ENCODE measurements at regions of chr17 and their contacts with region 1.

Region 1: DNA sequence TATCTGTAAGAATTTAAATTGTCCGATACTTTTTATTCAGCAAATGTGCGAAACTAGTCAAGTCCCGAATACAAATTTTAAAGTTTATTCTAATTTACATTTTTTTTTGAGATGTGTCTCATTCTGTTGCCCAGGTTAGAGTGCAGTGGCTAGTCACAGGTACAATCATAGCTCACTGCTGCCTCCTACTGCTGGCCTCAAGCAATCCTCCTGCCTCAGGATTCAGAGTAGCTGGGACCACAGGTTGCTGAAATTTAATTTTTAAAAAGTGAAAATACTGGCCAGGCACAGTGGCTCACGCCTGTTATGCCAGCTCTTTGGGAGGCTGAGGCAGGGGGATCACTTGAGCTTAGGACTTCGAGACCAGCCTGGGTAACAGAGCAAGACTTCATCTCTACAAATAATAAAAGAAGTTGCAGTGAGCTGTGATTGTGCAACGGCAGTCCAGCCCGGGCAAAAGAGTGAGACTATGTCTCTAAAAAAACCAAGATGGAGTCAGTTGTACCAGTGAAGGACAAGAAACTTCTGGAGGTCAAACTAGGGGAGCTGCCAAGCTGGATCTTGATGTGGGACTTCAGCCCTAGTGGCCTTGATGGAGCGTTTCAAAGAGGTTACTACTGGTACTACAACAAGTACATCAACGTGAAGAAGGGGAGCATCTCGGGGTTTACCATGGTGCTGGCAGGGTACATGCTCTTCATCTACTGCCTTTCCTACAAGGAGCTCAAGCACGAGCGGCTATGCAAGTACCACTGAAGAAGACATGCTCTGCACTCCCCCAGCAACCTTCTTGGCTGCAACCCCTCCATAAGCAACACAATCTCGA is 5.6 kb downstream of the POLG2 start:
- DNase-seq: peak; percentile 58
- H3K4me3 ChIP-seq: no peak overlapping the region
- H3K27ac ChIP-seq: no peak overlapping the region
- H3K4me1 ChIP-seq: peaks cover 15% of the 10 kb centered on the region
- H3K27me3 ChIP-seq: no peaks in the 10 kb centered on the region
- CTCF ChIP-seq: peak; percentile 74 to 76
- POLR2A ChIP-seq: no peak

Region 2: GRCh38 chr17:64063766-64064224 is 427.5 kb before region 1 on chr17:
- CTCF ChIA-PET with region 1: no interaction called
- POLR2A ChIA-PET with region 1: no interaction called
- dilution Hi-C with region 1: no loop called
- intact Hi-C with region 1: no loop called
- DNase-seq: peak; percentile 73
- H3K4me3 ChIP-seq: no peak overlapping the region
- H3K27ac ChIP-seq: no peak overlapping the region
- H3K4me1 ChIP-seq: peaks cover 22% of the 10 kb centered on the region
- H3K27me3 ChIP-seq: no peaks in the 10 kb centered on the region
- CTCF ChIP-seq: peak; percentile 60 to 71
- POLR2A ChIP-seq: no peak

Region 3: DNA sequence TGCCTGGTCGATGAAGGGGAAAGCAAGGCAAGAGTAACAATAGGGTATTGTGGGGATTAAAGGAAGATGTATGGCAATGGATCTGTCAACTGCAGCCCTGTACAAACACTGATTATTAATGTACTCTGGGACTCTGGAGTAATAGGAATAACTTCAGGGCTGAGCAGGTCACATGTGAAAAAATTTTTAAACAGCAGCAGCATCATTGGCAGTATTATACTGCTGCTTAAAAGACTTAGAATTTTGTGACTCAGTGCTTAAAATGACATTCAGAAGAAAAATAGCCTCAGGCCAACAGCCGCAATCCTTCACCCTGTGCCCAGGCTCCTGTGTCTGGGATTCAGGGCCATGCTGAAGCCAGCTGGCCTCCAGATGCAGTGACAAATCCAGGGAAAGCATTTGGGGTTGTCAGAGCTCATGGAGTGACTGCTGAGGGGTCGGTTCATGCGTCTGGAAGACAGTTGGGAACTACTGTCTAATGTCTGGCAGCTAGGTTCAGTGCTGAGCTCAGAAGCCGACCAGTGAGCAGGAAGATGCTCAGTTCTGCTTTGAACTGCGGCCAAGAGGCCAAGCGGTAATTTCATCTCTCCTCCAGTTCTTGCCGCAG is 250.4 kb before region 1 on chr17:
- CTCF ChIA-PET with region 1: no interaction called
- POLR2A ChIA-PET with region 1: no interaction called
- dilution Hi-C with region 1: no loop called
- intact Hi-C with region 1: no loop called
- DNase-seq: peak; percentile 75
- H3K4me3 ChIP-seq: no peak overlapping the region
- H3K27ac ChIP-seq: no peak overlapping the region
- H3K4me1 ChIP-seq: peaks cover 6% of the 10 kb centered on the region
- H3K27me3 ChIP-seq: no peaks in the 10 kb centered on the region
- CTCF ChIP-seq: no peak
- POLR2A ChIP-seq: no peak

Region 4: DNA sequence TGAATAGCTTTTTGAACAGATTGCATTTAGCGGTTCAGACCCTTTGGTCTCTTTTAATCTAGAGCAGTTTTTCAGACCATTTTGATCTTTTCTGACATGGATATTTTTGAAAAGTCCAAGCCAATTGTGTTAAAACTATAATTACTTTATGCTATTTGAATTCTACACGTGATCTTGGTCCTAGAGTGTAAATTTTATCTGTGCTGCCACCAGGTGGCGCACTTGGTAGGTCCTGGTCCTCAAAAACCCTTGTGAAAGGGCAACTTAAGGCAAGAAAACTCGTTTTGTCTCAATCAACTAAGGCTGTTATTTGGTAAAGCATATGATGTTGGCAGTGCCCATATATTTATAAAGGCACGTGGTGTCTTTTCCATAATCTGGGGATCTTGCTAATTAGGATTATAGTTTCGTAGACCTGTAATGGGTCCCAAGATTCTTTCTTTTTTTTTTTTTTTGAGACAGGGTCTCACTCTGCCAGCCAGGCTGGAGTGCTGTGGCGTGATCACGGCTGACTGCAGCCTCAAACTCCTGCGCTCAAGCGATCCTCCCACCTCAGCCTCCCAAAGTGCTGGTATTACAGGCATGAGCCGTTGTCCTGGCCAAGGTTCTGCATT is 184.3 kb before region 1 on chr17:
- CTCF ChIA-PET with region 1: interaction called, 18 read pairs
- POLR2A ChIA-PET with region 1: no interaction called
- dilution Hi-C with region 1: loop called (anchors 10 kb)
- intact Hi-C with region 1: loop called (anchors 1 kb)
- DNase-seq: peak; percentile 84
- H3K4me3 ChIP-seq: no peak overlapping the region
- H3K27ac ChIP-seq: no peak overlapping the region
- H3K4me1 ChIP-seq: peaks cover 5% of the 10 kb centered on the region
- H3K27me3 ChIP-seq: no peaks in the 10 kb centered on the region
- CTCF ChIP-seq: peak; percentile 67 to 70
- POLR2A ChIP-seq: no peak

Region 5: GRCh38 chr17:64426568-64426967 is 64.7 kb before region 1 on chr17:
- CTCF ChIA-PET with region 1: interaction called, 345 read pairs
- POLR2A ChIA-PET with region 1: no interaction called
- dilution Hi-C with region 1: no loop called
- intact Hi-C with region 1: no loop called
- DNase-seq: no peak
- H3K4me3 ChIP-seq: no peak overlapping the region
- H3K27ac ChIP-seq: no peak overlapping the region
- H3K4me1 ChIP-seq: no peaks in the 10 kb centered on the region
- H3K27me3 ChIP-seq: no peaks in the 10 kb centered on the region
- CTCF ChIP-seq: no peak
- POLR2A ChIP-seq: no peak

Region 6: GRCh38 chr17:64448665-64449512 is 42.4 kb before region 1 on chr17 and contains the start of gene MILR1:
- CTCF ChIA-PET with region 1: interaction called, 10 read pairs
- POLR2A ChIA-PET with region 1: no interaction called
- dilution Hi-C with region 1: no loop called
- intact Hi-C with region 1: no loop called
- DNase-seq: peak; percentile 92
- H3K4me3 ChIP-seq: peak within 1 kb of the TSS in 2 of 3 experiments; percentile 19 to 46
- H3K27ac ChIP-seq: peak within 1 kb of the TSS; percentile 50
- H3K4me1 ChIP-seq: peaks cover 12% of the 10 kb centered on the region
- H3K27me3 ChIP-seq: no peaks in the 10 kb centered on the region
- CTCF ChIP-seq: no peak
- POLR2A ChIP-seq: peak; percentile 39
- total RNA-seq, gene MILR1: 1.2 and 1.6 TPM in 2 replicates

Region 7: GRCh38 chr17:64466019-64466685 is 25.1 kb before region 1 on chr17:
- CTCF ChIA-PET with region 1: interaction called, 12 read pairs
- POLR2A ChIA-PET with region 1: interaction called, 3 read pairs
- dilution Hi-C with region 1: no loop called
- intact Hi-C with region 1: no loop called
- DNase-seq: no peak
- H3K4me3 ChIP-seq: no peak overlapping the region
- H3K27ac ChIP-seq: no peak overlapping the region
- H3K4me1 ChIP-seq: peaks cover 11% of the 10 kb centered on the region
- H3K27me3 ChIP-seq: no peaks in the 10 kb centered on the region
- CTCF ChIP-seq: no peak
- POLR2A ChIP-seq: no peak

Region 8: GRCh38 chr17:64479650-64480049 is 11.6 kb before region 1 on chr17:
- CTCF ChIA-PET with region 1: interaction called, 78 read pairs
- POLR2A ChIA-PET with region 1: no interaction called
- dilution Hi-C with region 1: no loop called
- intact Hi-C with region 1: no loop called
- DNase-seq: no peak
- H3K4me3 ChIP-seq: no peak overlapping the region
- H3K27ac ChIP-seq: no peak overlapping the region
- H3K4me1 ChIP-seq: no peaks in the 10 kb centered on the region
- H3K27me3 ChIP-seq: no peaks in the 10 kb centered on the region
- CTCF ChIP-seq: no peak
- POLR2A ChIP-seq: no peak

Measured in endothelial cell of umbilical vein (primary cell).